ENCODE measurements at regions of chr7 and their contacts with region 1.

Region 1: GRCh38 chr7:38409531-38409930 is 136.1 kb upstream of the TARP start:
- DNase-seq: no peak
- ATAC-seq: no peak
- H3K4me3 ChIP-seq: no peak overlapping the region
- H3K27ac ChIP-seq: no peak overlapping the region
- H3K4me1 ChIP-seq: no peaks in the 10 kb centered on the region
- H3K27me3 ChIP-seq: no peaks in the 10 kb centered on the region

Region 2: GRCh38 chr7:38748056-38748611 is 338.6 kb after region 1 on chr7:
- intact Hi-C with region 1: loop called in 1 of 2 experiments (anchors 10 kb)
- DNase-seq: no peak
- ATAC-seq: no peak
- H3K4me3 ChIP-seq: no peak overlapping the region
- H3K27ac ChIP-seq: no peak overlapping the region
- H3K4me1 ChIP-seq: no peaks in the 10 kb centered on the region
- H3K27me3 ChIP-seq: no peaks in the 10 kb centered on the region

Measured in aorta (tissue), 5 donors.